ENCODE measurements at regions of chr19 and their contacts with region 1.

Region 1: DNA sequence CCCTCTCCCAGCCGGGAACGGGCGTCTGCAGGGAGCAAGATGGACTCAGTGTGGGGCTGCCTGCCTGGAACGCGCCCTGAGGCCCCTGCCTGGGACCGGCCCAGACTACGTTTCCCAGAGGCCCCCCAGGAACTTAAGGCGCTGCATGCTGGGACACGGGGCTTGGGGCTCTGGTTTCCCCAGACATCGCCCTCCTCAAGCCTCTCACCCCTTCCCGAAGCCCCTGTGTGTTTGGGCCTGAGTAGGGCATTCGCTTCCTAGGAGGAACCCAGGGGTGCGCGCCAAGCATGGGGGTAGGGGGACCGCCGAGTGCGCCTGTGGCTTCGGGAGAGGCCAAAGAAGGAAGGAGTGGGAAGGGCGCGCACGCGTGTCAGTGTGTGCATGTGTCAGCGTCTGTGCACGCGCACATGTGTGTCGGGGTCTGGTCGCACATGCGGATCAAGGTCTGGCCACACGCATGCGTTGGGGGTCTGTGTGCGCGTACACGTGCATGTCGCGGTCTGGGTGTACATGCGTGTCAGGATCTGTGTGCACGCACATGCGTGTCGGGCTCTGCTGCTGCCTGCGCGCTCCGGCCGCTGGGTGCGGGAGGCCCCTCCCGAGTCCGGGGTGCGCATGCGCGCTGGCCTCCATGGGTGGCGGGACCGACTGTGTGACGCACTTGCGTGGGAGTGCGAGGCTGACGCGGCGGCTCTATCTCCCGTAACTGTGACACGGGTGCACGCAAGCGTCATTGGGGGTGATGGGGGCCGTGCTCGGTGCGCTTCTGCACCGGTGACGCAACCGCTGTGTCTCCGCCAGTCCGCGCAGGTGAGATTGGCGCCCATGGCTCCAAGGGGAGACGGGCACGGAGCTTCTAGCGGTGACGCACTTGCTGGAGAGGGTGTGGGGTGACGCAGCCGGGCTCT is 16.2 kb downstream of the ZNF331 start:
- DNase-seq: peak; percentile 71 to 97 (median 94)
- ATAC-seq: peak; percentile 75 to 85 (median 82)
- H3K4me3 ChIP-seq: peak overlapping the region; percentile 60 to 68
- H3K4me3 Mint-ChIP-seq: peak overlapping the region; percentile 92 to 97 (median 93)
- H3K27ac ChIP-seq: peak overlapping the region; percentile 96
- H3K27ac Mint-ChIP-seq: peak overlapping the region; percentile 93 to 94
- H3K4me1 ChIP-seq: peaks cover 0 to 19% of the 10 kb centered on the region in 2 experiments
- H3K4me1 Mint-ChIP-seq: peaks cover 23 to 46% (median 31%) of the 10 kb centered on the region in 3 donors
- H3K27me3 ChIP-seq: no peaks in the 10 kb centered on the region
- H3K27me3 Mint-ChIP-seq: no peaks in the 10 kb centered on the region

Region 2: DNA sequence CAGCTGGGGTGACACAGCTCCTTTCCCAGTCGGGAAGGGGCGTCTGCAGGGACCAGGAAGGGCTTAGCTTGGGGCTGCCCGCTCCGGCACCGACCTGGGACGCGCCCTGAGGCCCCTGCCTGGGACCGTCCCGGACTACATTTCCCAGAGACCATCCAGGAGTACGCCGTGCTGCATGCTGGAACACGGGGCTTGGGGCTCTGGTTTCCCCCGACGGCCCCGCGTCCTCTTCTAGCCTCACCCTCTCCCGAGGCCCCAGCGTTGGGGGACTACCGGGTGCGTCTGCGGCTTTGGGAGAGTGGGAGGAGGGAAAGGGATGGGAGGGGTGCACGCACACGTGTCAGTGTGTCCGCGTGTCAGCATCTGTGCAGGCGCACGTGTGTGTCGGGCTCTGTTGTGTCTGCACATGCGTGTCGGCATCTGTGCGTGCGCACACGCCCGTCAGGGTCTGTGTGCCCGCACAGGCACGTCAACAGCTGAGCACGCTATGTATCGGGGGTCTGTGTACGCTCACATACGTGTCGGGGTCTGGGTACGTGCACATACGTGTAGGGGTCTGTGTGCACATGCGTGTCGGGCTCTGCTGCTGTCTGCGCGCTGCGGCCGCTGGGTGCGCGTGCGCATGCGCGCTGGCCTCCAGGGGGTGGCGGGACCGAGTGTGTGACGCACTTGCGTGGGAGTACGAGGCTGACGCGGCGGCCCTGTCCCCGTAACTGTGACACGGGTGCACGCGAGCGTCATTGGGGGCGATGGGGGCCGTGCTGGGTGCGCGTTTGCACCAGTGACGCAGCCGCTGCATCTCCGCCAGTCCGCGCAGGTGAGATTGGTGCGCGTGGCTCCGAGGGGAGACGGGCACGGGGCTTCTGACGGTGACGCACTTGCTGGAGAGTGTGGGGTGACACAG is 16.4 kb before region 1 on chr19 and contains the start of gene ZNF331:
- CTCF ChIA-PET with region 1: interaction called in 1 of 2 experiments, 3 read pairs
- POLR2A ChIA-PET with region 1: interaction called, 3 to 11 read pairs
- DNase-seq: peak; percentile 75 to 97 (median 93)
- ATAC-seq: peak; percentile 79 to 81 (median 80)
- H3K4me3 ChIP-seq: peak within 1 kb of the TSS; percentile 62 to 95
- H3K4me3 Mint-ChIP-seq: peak within 1 kb of the TSS; percentile 95 to 97 (median 95)
- H3K27ac ChIP-seq: peak within 1 kb of the TSS; percentile 93
- H3K27ac Mint-ChIP-seq: peak within 1 kb of the TSS; percentile 96 to 98
- H3K4me1 ChIP-seq: peaks cover 0 to 21% of the 10 kb centered on the region in 2 experiments
- H3K4me1 Mint-ChIP-seq: peaks cover 30 to 47% (median 35%) of the 10 kb centered on the region in 3 donors
- H3K27me3 ChIP-seq: no peaks in the 10 kb centered on the region
- H3K27me3 Mint-ChIP-seq: no peaks in the 10 kb centered on the region
- total RNA-seq, gene ZNF331: 35.9 to 455 (median 48.5) TPM